Activated T-helper 1 cell treated with anti-CD3 and anti-CD28 coated beads, Interleukin-12 subunit alpha, Interleukin-12 subunit beta, Interleukin-2, Interleukin-4 antibody, amounts not matched to agents 30 ng/mL and 10 ng/mL and 1 ng/mL, durations not matched to agents 14 hours and 24 hours and 36 hours (primary cell): ENCODE measurements at regions of chr2 and their contacts with region 1.

Region 1: GRCh38 chr2:27370026-27370815 is at the starts of genes EIF2B4 and SNX17:
- DNase-seq: peak; percentile 100
- H3K4me3 Mint-ChIP-seq: peak within 1 kb of the TSS; percentile 96
- H3K27ac Mint-ChIP-seq: peak within 1 kb of the TSS; percentile 98
- H3K4me1 Mint-ChIP-seq: peaks cover 43% of the 10 kb centered on the region
- H3K27me3 Mint-ChIP-seq: no peaks in the 10 kb centered on the region
- total RNA-seq, gene EIF2B4: 53.9 and 55.8 TPM in 2 replicates
- total RNA-seq, gene SNX17: 134 and 137 TPM in 2 replicates

Region 2: DNA sequence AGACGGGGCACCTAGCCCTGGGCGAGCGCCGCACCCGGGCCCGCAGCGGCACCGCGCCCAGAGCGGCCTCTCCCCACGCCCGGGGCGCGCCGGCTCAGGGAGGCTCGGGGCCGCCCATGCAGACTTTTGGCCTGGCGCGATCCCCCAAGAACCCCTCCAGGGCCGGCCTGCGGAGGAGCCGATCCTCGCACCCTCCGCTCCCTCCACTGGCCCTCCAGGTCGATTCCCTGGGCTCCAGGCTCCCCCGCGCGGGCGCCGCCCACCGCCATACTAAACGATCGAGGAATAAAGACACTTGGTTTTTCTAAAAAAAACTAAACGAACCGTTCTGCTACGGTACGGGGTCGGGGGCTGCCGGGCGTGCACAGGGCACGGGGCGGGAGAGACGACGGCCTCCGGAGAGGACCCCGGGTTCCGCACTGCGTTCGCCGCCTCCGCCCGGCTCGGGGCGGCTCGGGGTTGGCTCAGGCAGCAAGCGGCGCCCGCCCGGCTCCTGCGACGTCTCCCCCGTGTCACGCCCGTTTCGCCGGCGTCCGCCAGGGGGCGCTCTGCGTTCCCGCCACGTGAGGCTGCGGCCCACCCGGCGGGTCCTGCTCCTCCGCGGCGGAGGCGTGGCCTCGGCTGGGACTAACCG is 284.0 kb before region 1 on chr2:
- intact Hi-C with region 1: loop called (anchors 1 kb)
- DNase-seq: peak; percentile 99
- H3K4me3 Mint-ChIP-seq: peak overlapping the region; percentile 89
- H3K27ac Mint-ChIP-seq: peak overlapping the region; percentile 76
- H3K4me1 Mint-ChIP-seq: peaks cover 27% of the 10 kb centered on the region
- H3K27me3 Mint-ChIP-seq: no peaks in the 10 kb centered on the region

Region 3: DNA sequence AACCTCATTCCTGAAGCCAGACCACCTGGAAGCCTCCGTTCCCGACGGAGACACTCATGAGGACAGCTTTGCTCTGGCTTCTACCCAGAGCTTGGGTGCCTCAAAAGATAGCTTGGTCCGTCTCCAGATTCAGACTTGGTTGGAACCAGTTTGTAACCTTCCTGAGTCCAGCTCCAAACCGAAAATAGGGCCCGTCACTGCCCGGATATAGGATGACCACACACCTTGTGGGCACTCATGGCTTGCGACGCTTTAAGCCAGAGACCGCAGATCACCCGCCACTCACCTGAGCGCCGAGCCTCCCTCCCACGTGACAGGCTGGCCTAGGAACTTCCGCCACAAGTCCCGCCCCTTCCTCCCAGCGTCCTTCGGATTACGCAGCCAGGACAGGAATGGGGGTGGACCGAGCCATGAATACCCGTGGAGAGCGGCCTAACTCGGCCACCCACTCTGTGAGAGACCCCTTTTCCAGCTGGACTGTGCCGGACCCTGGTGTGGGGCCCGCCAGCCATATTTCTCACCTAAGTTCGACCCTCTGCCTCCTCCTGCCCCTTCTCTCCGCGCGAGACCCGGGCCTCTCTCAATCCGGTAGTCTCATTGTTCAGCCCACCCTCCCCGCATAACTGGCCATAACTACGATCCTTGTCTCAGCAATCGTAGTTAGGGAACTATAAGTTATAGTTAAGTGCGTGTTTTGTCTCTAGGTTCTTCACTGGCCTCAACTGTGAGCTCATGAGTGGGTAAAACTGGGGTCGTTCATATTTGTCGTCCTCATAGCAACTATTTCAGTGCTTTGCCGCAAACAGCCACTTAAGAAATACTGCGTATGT is 47.2 kb before region 1 on chr2 and contains the start of gene MPV17:
- intact Hi-C with region 1: loop called (anchors 1 kb)
- DNase-seq: peak; percentile 84
- H3K4me3 Mint-ChIP-seq: peak within 1 kb of the TSS; percentile 99
- H3K27ac Mint-ChIP-seq: peak within 1 kb of the TSS; percentile 88
- H3K4me1 Mint-ChIP-seq: peaks cover 32% of the 10 kb centered on the region
- H3K27me3 Mint-ChIP-seq: no peaks in the 10 kb centered on the region
- total RNA-seq, gene MPV17: 85.9 and 89.9 TPM in 2 replicates

Region 4: DNA sequence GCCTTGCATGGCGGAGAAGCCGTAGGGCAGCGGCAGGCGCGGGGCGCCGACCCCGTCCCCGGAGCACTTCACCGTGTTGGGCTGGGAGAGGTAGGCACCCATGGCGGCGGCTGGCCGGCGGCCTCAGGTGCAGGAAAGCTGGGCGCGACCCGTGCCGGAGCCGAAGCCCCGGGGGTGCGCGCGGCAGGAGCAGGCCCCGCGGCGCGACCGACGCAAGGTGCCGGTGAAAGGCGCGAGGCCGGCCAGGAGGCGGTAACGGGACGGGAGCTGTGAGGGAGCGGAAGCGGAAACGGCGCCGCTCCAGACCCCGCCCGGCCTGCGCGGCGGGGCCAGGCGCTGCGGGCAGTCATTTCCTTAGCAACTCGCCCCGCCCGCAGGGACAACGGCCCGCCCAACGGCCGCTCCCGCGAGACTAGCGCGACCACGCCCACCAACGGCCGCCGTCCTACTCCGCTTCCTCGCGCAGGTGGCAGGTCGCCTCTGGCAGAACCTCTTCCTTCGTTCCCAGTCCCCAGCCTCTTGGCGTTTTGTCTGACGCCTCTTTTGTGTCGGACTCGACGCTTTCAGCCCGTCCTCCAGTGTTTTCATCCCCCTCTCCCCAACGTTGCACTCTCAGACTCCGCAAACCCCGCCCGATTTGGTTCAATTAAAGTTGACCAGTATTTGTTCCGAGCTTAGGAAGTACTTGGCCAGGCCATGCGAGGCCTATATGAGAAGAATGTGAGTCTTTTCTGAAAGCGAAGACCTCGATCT is 39.3 kb after region 1 on chr2 and contains the start of gene PPM1G:
- intact Hi-C with region 1: loop called (anchors 1 kb)
- DNase-seq: peak; percentile 95
- H3K4me3 Mint-ChIP-seq: peak within 1 kb of the TSS; percentile 90
- H3K27ac Mint-ChIP-seq: peak within 1 kb of the TSS; percentile 89
- H3K4me1 Mint-ChIP-seq: peaks cover 29% of the 10 kb centered on the region
- H3K27me3 Mint-ChIP-seq: peaks cover 2% of the 10 kb centered on the region
- total RNA-seq, gene PPM1G: 158 and 160 TPM in 2 replicates

Region 5: DNA sequence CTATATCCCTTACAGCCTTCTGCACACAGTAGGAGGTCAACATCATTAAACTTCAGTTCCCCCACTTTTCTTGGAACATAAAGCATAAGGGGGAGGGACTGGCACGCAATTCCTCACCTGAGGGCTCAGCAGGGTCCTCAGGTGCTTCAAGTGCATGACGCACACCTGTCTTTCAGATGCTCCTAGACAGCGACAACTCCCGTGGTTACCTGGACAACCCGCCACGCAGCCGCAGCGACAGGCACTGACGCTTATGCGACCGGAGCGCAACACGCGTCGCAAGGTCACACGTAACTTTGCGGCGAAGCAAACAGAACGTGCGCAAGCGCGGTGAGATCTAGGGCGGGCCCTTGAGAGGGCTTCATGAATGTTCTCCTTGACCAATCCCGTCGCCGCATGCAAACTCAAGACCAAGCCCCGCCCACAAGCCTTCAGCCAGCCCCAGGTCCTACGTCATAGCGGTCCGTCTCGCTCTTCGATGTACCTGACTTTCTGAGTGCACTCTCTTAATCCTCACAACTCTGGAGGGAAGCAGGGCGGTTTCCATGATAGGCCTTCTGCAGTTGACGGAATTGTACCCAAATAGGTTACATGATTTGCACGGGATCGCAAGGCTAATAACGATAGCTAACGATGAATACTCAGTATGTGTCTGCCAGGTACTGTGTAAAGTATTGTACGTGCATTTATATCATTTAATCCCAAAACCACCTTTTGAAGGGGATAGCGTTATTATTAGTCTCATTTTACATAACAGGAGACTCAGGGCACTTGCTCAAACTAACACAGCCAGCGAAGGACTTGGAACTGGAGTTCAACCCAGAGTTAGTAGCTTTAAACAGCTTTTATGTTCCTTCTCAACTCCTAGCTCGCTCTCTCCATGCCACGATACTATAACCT is 119.5 kb after region 1 on chr2 and contains the start of gene IFT172:
- intact Hi-C with region 1: loop called (anchors 1 kb)
- DNase-seq: peak; percentile 98
- H3K4me3 Mint-ChIP-seq: peak within 1 kb of the TSS; percentile 91
- H3K27ac Mint-ChIP-seq: peak within 1 kb of the TSS; percentile 91
- H3K4me1 Mint-ChIP-seq: peaks cover 22% of the 10 kb centered on the region
- H3K27me3 Mint-ChIP-seq: peaks cover 13% of the 10 kb centered on the region
- total RNA-seq, gene IFT172: 13.4 and 13.5 TPM in 2 replicates

Region 6: DNA sequence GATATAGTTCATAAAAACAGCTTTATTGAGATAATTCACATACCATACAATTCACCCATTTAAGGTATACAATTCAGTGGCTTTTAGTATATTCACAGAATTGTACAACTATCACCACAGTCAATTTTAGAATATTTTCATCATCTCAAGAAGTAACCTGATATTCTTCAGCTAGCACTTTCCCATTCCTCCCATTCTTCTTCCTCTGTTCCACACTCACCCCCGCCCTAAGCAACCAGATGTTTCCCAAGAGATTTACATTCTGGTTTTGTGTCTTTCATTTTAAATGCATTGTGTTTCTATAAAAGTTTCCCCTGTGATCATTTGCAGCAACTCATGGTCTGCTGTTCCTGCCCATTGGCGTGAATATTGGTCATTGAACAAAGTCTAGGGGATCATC is 264.1 kb after region 1 on chr2:
- intact Hi-C with region 1: no loop called
- DNase-seq: no peak
- H3K4me3 Mint-ChIP-seq: no peak overlapping the region
- H3K27ac Mint-ChIP-seq: no peak overlapping the region
- H3K4me1 Mint-ChIP-seq: peaks cover 38% of the 10 kb centered on the region
- H3K27me3 Mint-ChIP-seq: no peaks in the 10 kb centered on the region

Region 7: GRCh38 chr2:27663463-27664249 is 293.4 kb after region 1 on chr2 and contains the starts of genes SLC4A1AP and SUPT7L:
- intact Hi-C with region 1: loop called (anchors 1 kb)
- DNase-seq: peak; percentile 70
- H3K4me3 Mint-ChIP-seq: peak within 1 kb of the TSS; percentile 96
- H3K27ac Mint-ChIP-seq: peak within 1 kb of the TSS; percentile 97
- H3K4me1 Mint-ChIP-seq: peaks cover 55% of the 10 kb centered on the region
- H3K27me3 Mint-ChIP-seq: no peaks in the 10 kb centered on the region
- total RNA-seq, gene SLC4A1AP: 29.7 and 29.8 TPM in 2 replicates
- total RNA-seq, gene SUPT7L: 32.5 and 35.2 TPM in 2 replicates